Pancreas (tissue), 10 donors: ENCODE measurements at regions of chr14 and their contacts with region 1.

Region 1: DNA sequence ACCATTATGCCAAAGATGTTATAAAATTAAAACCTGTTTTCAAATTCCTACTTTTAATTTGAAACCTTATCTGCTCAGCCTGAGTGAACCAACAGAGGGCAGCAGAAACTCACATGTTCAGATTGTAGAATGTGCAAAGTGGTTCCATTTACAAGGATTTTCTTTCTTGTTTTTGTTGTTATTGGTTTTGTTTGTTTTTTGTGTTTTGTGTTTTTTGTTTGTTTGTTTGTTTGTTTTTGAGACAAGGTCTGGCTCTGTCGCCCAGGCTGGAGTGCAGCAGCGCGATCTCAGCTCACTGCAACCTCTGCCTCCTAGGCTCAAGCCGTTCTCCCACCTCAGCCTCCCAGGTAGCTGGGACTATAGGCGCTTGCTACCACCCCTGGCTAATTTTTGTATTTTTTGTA is 22.8 kb upstream of the GARIN2 start:
- DNase-seq: peak in 1 of 6 donors; percentile 33
- ATAC-seq: peak; percentile 55 to 72 (median 70)
- H3K4me3 ChIP-seq: no peak overlapping the region
- H3K27ac ChIP-seq: no peak overlapping the region
- H3K4me1 ChIP-seq: no peaks in the 10 kb centered on the region
- H3K27me3 ChIP-seq: no peaks in the 10 kb centered on the region
- CTCF ChIP-seq: peak; percentile 32 to 41 (median 36)

Region 2: DNA sequence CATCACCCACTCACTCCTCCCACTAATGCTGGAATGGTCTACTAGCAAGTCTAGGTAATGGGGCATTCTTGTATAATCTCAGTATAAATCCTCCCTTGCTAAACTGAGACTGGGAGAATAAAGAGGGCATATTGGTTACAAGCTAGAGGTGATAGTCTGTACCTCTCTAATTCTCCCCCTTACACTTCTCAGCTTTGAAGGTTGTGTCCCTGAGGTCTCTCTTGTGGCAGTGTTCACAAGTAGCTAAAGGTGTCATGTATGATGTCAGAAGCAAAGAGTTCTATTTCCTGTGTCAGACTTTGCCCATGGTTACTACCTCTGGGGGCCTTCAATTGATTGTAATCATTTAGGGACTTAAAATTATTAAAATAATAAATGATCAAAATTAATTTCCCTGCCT is 706.8 kb before region 1 on chr14:
- intact Hi-C with region 1: no loop called
- DNase-seq: no peak
- ATAC-seq: no peak
- H3K4me3 ChIP-seq: no peak overlapping the region
- H3K27ac ChIP-seq: no peak overlapping the region
- H3K4me1 ChIP-seq: no peaks in the 10 kb centered on the region
- H3K27me3 ChIP-seq: no peaks in the 10 kb centered on the region
- CTCF ChIP-seq: no peak

Region 3: DNA sequence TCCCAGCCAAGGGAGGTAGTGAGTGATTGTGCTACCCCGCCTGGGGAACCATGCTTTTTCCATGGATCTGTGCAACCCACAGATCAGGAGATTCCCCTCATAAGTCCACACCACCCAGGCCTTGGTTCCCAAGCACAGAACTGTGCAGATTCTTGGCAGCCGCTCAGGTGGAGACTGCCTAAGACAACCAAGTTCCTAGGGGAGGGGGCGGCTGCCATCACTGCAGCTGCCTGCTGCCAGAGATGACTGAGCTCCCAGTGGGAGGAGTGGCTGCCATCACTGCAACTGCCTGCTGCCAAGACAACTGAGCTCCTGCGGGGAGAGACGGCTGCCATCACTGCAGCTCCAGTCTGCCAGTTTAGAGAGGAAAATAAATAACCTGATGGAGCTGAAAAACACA is 115.6 kb before region 1 on chr14:
- intact Hi-C with region 1: no loop called
- DNase-seq: no peak
- ATAC-seq: no peak
- H3K4me3 ChIP-seq: no peak overlapping the region
- H3K27ac ChIP-seq: no peak overlapping the region
- H3K4me1 ChIP-seq: no peaks in the 10 kb centered on the region
- H3K27me3 ChIP-seq: no peaks in the 10 kb centered on the region
- CTCF ChIP-seq: no peak

Region 4: DNA sequence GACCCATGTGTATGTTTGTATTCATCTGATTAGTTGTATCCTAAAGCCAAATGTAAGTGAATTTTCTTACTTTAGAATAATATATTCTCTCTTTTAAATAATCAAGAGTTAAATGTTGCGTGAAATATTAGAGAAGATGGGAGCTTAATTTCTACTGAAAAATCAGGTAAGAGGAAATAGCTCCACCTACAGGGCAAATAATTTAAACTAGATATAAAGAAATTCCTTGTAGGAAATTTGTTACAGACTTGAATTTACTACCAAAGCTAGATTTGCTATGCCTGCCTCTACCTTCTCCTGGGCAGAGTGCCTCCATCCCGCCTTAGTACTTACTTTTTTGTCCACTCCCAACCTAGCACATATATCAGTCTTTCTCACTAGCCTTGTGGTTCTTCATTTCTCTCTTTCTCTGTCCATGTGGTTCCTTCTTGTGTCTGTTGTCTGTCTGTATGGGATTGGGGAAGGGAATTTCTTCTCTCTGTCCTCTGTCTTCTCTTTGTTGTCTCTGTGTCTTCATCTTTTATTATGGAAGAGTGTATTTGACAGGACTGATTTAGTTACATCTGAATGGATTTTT is 119.5 kb after region 1 on chr14:
- intact Hi-C with region 1: loop called in 2 of 3 experiments (anchors 5 to 10 kb)
- DNase-seq: no peak
- ATAC-seq: peak in 3 of 4 donors; percentile 41 to 66 (median 59)
- H3K4me3 ChIP-seq: no peak overlapping the region
- H3K27ac ChIP-seq: no peak overlapping the region
- H3K4me1 ChIP-seq: peaks cover 0 to 15% (median 3%) of the 10 kb centered on the region in 3 donors
- H3K27me3 ChIP-seq: no peaks in the 10 kb centered on the region
- CTCF ChIP-seq: peak in 3 of 4 donors; percentile 27 to 52 (median 46)